ENCODE measurements at regions of chr1 and their contacts with region 1.

Region 1: GRCh38 chr1:237084258-237085077 is 42.5 kb downstream of the RYR2 start:
- DNase-seq: no peak
- ATAC-seq: no peak
- H3K4me3 Mint-ChIP-seq: no peak overlapping the region
- H3K27ac Mint-ChIP-seq: no peak overlapping the region
- H3K4me1 Mint-ChIP-seq: no peaks in the 10 kb centered on the region
- H3K27me3 Mint-ChIP-seq: peaks cover 6% of the 10 kb centered on the region
- CTCF ChIP-seq: no peak

Region 2: DNA sequence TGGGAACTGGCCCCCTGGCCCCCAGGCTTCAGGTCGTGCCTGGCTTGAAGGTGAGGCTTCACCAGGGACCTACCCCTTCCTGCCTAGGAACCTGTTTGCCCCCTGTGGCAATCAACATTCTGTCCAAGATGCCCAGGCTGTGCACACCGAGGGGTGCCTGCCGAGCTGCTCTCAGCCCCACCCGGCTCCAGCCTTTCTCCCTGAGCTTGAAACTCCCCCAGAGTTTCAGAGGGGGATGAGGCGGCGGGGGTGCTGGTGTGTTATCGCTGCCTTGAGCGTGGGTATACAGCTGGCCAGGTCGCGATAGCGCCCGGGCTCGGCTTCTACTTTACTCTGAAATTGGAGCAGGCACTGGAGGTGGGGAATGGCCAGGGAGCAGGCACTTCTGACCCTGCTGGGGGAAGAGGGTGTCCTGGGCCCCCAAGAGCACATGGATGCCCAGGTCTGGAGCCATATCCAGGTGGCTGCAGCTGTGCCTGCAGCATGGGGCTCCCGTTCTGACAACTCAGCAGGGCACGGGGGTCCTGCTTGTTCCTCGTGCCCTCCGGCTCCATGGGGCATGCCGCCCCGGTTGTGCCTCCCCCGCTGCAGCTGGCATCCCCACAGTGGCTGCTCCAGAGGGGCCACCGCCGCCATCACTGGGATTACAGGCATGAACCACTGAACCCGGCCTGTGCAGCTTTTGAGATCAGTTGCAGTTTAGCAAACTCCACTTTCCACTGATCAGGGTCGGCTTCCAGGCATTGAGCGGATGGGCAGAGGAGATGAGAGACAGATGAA is 12.6 kb before region 1 on chr1:
- CTCF ChIA-PET with region 1: no interaction called
- POLR2A ChIA-PET with region 1: no interaction called
- intact Hi-C with region 1: loop called (anchors 2 kb)
- DNase-seq: no peak
- ATAC-seq: no peak
- H3K4me3 Mint-ChIP-seq: no peak overlapping the region
- H3K27ac Mint-ChIP-seq: no peak overlapping the region
- H3K4me1 Mint-ChIP-seq: no peaks in the 10 kb centered on the region
- H3K27me3 Mint-ChIP-seq: peaks cover 4% of the 10 kb centered on the region
- CTCF ChIP-seq: no peak

Region 3: GRCh38 chr1:237154157-237154556 is 69.7 kb after region 1 on chr1:
- CTCF ChIA-PET with region 1: no interaction called
- POLR2A ChIA-PET with region 1: no interaction called
- intact Hi-C with region 1: no loop called
- DNase-seq: no peak
- ATAC-seq: no peak
- H3K4me3 Mint-ChIP-seq: no peak overlapping the region
- H3K27ac Mint-ChIP-seq: no peak overlapping the region
- H3K4me1 Mint-ChIP-seq: no peaks in the 10 kb centered on the region
- H3K27me3 Mint-ChIP-seq: peaks cover 4% of the 10 kb centered on the region
- CTCF ChIP-seq: no peak

Region 4: DNA sequence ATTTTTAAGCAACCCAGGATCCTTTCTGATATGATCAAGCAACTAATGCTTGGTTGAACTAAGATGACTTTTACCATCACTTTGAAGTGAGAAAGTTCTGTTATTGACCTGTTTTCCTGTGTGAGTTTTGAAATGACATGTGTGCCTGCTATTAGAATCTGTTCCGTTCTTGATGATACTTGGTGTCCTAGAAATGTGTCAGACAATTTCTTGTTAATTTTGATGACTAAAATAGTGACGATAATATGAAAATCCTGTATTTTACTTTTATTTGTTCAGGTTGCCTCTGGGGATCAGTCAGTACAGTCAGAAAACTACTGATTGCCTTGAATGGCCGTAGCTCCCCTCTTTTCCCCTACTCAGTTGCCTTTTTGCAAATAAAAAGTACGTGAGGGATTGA is 185.5 kb after region 1 on chr1:
- CTCF ChIA-PET with region 1: no interaction called
- POLR2A ChIA-PET with region 1: no interaction called
- intact Hi-C with region 1: no loop called
- DNase-seq: no peak
- ATAC-seq: peak; percentile 47
- H3K4me3 Mint-ChIP-seq: no peak overlapping the region
- H3K27ac Mint-ChIP-seq: no peak overlapping the region
- H3K4me1 Mint-ChIP-seq: peaks cover 6% of the 10 kb centered on the region
- H3K27me3 Mint-ChIP-seq: peaks cover 4% of the 10 kb centered on the region
- CTCF ChIP-seq: no peak